CD4-positive, alpha-beta memory T cell (primary cell): ENCODE measurements at regions of chr14 and their contacts with region 1.

Region 1: DNA sequence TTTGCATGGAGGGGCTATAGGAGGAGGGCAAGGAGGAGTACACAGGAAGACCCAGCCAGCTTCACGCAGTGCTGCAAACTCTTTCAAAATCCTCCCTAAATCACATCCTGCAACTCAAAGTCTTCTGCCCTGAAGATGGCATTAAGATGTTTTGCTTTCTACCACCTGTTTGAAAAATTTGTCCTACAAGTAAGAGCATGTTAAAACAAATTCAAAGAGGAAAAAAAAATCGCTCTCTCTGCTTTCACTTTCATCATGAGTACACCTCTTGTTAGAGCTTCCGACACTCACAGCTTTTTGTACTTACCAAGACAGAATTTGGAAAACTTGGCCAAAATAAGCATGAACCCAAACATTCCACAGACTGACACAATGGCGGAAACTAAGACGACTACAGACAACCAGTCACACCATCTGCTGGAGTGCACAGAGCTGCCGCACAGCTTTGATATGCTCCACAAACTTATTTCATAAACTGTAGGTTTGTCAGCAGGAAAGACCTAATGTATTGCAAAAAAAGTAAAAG is 21.3 kb downstream of the GCH1 start:
- DNase-seq: peak; percentile 46 to 65 (median 54)
- H3K4me3 ChIP-seq: peak overlapping the region; percentile 32 to 77
- H3K4me3 Mint-ChIP-seq: peak overlapping the region; percentile 82 to 95 (median 92)
- H3K27ac ChIP-seq: peak overlapping the region; percentile 59
- H3K27ac Mint-ChIP-seq: peak overlapping the region; percentile 80 to 98 (median 96)
- H3K4me1 ChIP-seq: peaks cover 45% of the 10 kb centered on the region
- H3K4me1 Mint-ChIP-seq: peaks cover 41 to 68% (median 47%) of the 10 kb centered on the region in 4 donors
- H3K27me3 ChIP-seq: no peaks in the 10 kb centered on the region
- H3K27me3 Mint-ChIP-seq: no peaks in the 10 kb centered on the region

Region 2: GRCh38 chr14:54116972-54117371 is 764.3 kb before region 1 on chr14:
- CTCF ChIA-PET with region 1: no interaction called
- POLR2A ChIA-PET with region 1: no interaction called
- intact Hi-C with region 1: no loop called
- DNase-seq: no peak
- H3K4me3 ChIP-seq: no peak overlapping the region
- H3K4me3 Mint-ChIP-seq: no peak overlapping the region
- H3K27ac ChIP-seq: no peak overlapping the region
- H3K27ac Mint-ChIP-seq: no peak overlapping the region
- H3K4me1 ChIP-seq: no peaks in the 10 kb centered on the region
- H3K4me1 Mint-ChIP-seq: peaks cover 0 to 5% (median 0%) of the 10 kb centered on the region in 4 donors
- H3K27me3 ChIP-seq: no peaks in the 10 kb centered on the region
- H3K27me3 Mint-ChIP-seq: peaks cover 2 to 3% of the 10 kb centered on the region in 2 donors

Region 3: GRCh38 chr14:54450535-54450934 is 430.8 kb before region 1 on chr14:
- CTCF ChIA-PET with region 1: no interaction called
- POLR2A ChIA-PET with region 1: no interaction called
- intact Hi-C with region 1: no loop called
- DNase-seq: no peak
- H3K4me3 ChIP-seq: no peak overlapping the region
- H3K4me3 Mint-ChIP-seq: no peak overlapping the region
- H3K27ac ChIP-seq: no peak overlapping the region
- H3K27ac Mint-ChIP-seq: no peak overlapping the region
- H3K4me1 ChIP-seq: no peaks in the 10 kb centered on the region
- H3K4me1 Mint-ChIP-seq: no peaks in the 10 kb centered on the region
- H3K27me3 ChIP-seq: no peaks in the 10 kb centered on the region
- H3K27me3 Mint-ChIP-seq: peaks cover 5 to 7% of the 10 kb centered on the region in 2 donors

Region 4: DNA sequence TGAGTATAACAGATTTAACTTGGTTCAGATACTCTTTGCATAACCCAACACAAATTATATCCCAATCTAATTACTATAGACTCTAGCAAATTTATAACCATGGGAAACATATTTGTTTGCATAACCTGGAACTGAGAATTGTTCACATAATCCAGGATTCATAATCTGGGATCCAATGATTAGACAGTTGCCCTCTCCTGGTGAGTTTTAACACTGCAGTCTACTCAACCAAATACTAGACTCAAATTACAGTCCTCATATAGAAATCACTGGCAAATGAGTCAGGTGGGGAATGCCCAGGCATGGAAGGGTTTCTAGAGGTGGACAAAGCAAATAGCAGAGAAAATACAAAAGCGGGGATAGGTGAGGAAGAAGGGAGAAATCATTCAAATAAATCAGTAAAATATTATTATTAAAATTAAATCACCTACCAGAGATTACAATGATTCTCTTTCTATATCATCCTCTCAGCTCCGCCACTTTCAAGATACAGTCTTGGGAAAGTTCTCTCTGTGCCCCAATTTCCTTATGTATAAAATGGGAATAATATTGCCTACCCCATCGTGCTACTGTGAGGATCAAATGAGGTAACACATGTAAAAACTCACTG is 12.0 kb after region 1 on chr14:
- CTCF ChIA-PET with region 1: interaction called, 47 read pairs
- POLR2A ChIA-PET with region 1: interaction called, 5 read pairs
- intact Hi-C with region 1: loop called (anchors 1 kb)
- DNase-seq: peak; percentile 27 to 46 (median 36)
- H3K4me3 ChIP-seq: no peak overlapping the region
- H3K4me3 Mint-ChIP-seq: no peak overlapping the region
- H3K27ac ChIP-seq: no peak overlapping the region
- H3K27ac Mint-ChIP-seq: peak overlapping the region in 4 of 7 donors; percentile 1 to 48 (median 21)
- H3K4me1 ChIP-seq: peaks cover 24% of the 10 kb centered on the region
- H3K4me1 Mint-ChIP-seq: peaks cover 42 to 64% (median 51%) of the 10 kb centered on the region in 4 donors
- H3K27me3 ChIP-seq: no peaks in the 10 kb centered on the region
- H3K27me3 Mint-ChIP-seq: no peaks in the 10 kb centered on the region